Posterior cingulate gyrus (tissue), 11 donors: ENCODE measurements at regions of chr17 and their contacts with region 1.

Region 1: GRCh38 chr17:17496189-17497064 is at the start of gene RASD1:
- DNase-seq: peak; percentile 81 to 99 (median 92)

Region 2: GRCh38 chr17:17356149-17356930 is 140.1 kb before region 1 on chr17:
- intact Hi-C with region 1: loop called (anchors 2 kb)
- DNase-seq: peak; percentile 76 to 97 (median 84)

Region 3: GRCh38 chr17:17568749-17569195 is 72.3 kb after region 1 on chr17:
- intact Hi-C with region 1: loop called (anchors 2 kb)
- DNase-seq: peak in 9 of 10 donors; percentile 59 to 94 (median 70)

Region 4: GRCh38 chr17:17591355-17592298 is 95.2 kb after region 1 on chr17 and contains the start of gene PEMT:
- intact Hi-C with region 1: loop called (anchors 1 kb)
- DNase-seq: peak; percentile 94 to 100 (median 98)

Region 5: GRCh38 chr17:17641621-17642409 is 145.4 kb after region 1 on chr17:
- intact Hi-C with region 1: loop called (anchors 1 kb)
- DNase-seq: peak; percentile 60 to 97 (median 86)

Region 6: DNA sequence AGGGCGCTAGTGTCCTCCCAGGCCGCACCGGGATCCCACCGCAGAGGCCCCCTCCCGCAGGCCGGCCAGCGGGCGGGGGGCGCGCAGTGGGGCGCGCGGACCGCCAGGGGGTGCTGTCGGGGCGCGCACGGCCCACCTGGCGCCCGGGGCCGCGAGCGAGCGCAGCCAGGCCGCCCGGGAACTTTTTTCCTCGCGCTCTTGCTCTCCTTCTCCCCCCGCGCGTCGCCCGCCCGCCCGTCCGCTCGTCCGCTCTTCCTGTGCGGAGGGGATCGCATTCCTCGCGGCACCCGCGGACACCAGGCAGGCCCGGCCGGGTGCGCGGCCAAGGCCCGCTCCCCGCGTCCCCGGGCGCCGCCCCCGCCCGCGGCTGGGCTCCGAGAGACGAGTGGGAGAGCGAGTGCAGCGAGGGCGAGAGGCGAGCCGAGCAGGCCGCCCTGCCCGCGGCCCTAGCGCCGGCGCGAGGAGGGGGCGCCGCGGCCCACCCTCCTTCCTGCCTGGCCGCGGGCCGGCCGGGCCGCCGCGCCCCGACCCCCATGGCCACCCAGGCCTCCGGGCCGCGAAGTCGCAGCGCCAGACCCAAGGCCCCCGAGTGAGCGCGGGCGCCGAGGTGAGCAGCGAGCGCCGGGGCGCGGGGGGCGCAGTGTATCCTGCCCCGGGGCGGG is 184.9 kb after region 1 on chr17 and contains the start of gene RAI1:
- intact Hi-C with region 1: no loop called
- DNase-seq: peak in 9 of 10 donors; percentile 53 to 95 (median 66)